HEK293 (cell line): ENCODE measurements at regions of chr2 and their contacts with region 1.

Region 1: DNA sequence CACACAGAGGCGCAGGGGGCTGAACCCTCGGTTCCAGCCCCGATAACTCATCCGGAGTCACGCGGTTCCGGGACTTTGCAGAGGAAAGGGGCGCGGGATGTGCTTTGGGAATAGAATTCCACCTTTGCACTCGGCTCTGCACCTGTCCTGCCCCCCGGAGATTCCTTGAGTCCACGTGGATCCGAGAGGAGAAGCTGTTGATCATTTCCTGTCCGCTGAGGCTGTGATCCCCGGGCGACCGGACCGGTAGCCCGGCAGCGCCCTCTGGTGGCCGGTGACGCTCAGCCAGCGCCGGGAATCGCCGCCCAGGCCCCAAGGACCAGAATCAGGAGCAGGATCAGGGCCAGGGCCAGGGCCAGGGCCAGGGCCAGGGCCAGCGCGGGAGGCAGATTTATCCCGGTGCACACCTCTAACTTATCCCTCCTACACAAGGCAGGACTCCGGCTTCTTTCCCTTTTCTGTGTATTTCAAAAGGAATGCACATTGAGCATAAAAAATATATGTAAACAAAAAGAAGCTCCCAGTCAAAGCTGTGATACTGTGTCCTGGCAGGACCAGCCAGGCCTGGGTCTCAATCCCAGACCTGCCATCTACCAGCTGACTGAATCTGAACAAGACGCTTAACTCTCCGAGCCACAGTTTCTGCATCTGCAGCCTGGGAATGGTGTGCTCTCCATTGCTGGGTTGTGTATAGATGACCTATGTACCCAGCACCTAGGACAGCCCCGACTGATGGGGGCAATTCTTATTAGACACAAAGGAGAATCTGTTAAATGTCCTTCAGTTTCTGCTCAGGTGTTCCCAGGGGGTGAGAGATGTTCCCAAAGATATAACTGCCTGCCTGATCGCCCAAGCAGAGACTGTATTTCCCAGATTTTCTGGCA is 8.5 kb upstream of the SPATA3 start:
- H3K4me3 ChIP-seq: peak overlapping the region; percentile 41
- H3K27ac ChIP-seq: no peak overlapping the region
- H3K4me1 ChIP-seq: 0 out of 2 replicates have a peak, but pooled peaks cover 3% of the 10 kb centered on the region
- CTCF ChIP-seq: peak; percentile 90

Region 2: GRCh38 chr2:230824406-230824978 is 162.9 kb before region 1 on chr2:
- CTCF ChIA-PET with region 1: interaction called, 57 read pairs
- POLR2A ChIA-PET with region 1: no interaction called
- H3K4me3 ChIP-seq: no peak overlapping the region
- H3K27ac ChIP-seq: no peak overlapping the region
- H3K4me1 ChIP-seq: no peaks in the 10 kb centered on the region
- CTCF ChIP-seq: peak; percentile 73

Region 3: DNA sequence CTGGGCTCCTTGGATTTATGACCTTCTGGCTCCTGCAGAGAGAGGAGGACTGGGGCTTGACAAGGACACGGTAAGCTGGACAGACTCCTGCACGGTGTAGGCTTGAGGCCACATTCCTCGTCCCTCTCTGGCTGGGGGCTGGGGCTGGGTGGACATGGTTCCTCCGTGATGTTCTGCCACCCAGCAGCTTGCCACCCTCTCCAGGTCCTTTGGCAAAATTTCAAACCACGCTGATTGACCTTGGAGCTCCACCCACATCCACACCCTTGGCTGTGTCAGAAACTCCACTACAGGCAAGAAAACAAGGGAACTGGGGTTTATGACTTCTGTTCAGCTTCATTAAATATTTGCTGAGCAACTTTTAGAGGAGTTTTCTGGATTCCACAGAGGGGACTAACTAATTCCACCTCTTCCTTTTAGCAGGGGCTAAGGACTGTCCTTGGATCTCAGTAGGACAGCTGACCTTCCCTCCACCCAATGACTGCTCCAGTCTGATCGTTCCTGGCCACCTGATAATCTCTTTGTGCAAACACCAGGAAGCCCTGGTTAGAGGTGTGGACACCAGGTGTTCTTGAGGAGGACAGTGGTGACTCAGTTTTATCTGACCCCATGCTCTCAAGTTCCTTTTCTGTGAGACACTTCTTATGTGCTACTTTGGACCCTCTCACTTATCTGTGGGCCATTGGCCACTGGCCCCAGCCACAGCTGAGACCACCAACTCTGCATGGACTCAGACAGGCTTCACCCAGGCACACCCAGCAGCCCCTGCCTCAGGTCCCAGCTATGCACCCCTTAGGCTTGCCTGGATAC is 91.6 kb before region 1 on chr2:
- CTCF ChIA-PET with region 1: interaction called, 55 read pairs
- POLR2A ChIA-PET with region 1: no interaction called
- H3K4me3 ChIP-seq: no peak overlapping the region
- H3K27ac ChIP-seq: no peak overlapping the region
- H3K4me1 ChIP-seq: no peaks in the 10 kb centered on the region
- CTCF ChIP-seq: no peak

Region 4: GRCh38 chr2:230942920-230943896 is 44.2 kb before region 1 on chr2:
- CTCF ChIA-PET with region 1: no interaction called
- POLR2A ChIA-PET with region 1: no interaction called
- H3K4me3 ChIP-seq: no peak overlapping the region
- H3K27ac ChIP-seq: no peak overlapping the region
- H3K4me1 ChIP-seq: no peaks in the 10 kb centered on the region
- CTCF ChIP-seq: no peak

Region 5: DNA sequence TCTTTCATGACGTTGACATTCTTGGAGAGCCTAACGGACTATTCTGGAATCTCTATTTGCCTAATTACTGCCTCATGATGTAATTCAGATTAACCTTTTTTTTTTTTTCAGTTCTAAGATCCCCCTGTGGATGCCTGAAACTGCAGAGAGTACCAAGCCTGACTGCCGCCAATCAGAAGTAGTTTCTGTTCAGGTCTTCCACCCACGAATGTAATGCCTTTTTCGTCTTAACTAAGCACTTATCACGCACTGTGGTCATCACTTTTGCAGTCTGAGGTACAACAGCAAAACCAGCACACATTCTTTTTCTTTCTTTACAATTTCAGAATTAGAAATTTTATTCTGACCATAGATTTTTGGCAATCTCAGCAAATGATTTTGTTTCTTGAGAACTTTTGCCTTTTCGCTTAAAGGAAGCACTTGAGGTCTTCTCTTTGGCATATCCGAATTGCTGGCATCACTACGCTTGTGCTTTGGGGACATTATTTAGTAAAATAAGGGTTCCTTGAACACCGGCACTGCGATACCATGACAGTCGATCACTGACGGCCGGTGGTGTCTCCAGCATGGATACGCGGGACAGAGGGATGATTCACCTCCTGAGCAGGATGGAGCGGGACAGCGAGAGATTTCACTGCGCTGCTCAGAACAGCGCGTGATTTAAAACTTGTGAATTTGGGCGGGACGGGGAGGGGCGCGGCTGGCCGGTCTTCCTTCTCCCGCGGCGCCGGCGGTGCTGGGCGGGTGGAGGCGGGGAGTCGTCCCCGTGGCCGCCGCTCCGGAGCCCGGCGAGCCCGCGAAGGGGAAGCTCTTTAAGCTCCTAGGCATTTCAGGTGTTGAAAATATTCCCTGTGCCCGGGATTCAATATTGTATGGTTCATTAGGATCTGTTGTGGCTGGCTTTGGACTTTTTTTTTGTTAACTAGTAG is 30.3 kb before region 1 on chr2:
- CTCF ChIA-PET with region 1: interaction called, 18 read pairs
- POLR2A ChIA-PET with region 1: no interaction called
- H3K4me3 ChIP-seq: peak overlapping the region; percentile 38
- H3K27ac ChIP-seq: no peak overlapping the region
- H3K4me1 ChIP-seq: no peaks in the 10 kb centered on the region
- CTCF ChIP-seq: no peak

Region 6: GRCh38 chr2:231000211-231000904 is 13.0 kb after region 1 on chr2:
- CTCF ChIA-PET with region 1: interaction called, 16 read pairs
- POLR2A ChIA-PET with region 1: no interaction called
- H3K4me3 ChIP-seq: no peak overlapping the region
- H3K27ac ChIP-seq: no peak overlapping the region
- H3K4me1 ChIP-seq: no peaks in the 10 kb centered on the region
- CTCF ChIP-seq: no peak

Region 7: DNA sequence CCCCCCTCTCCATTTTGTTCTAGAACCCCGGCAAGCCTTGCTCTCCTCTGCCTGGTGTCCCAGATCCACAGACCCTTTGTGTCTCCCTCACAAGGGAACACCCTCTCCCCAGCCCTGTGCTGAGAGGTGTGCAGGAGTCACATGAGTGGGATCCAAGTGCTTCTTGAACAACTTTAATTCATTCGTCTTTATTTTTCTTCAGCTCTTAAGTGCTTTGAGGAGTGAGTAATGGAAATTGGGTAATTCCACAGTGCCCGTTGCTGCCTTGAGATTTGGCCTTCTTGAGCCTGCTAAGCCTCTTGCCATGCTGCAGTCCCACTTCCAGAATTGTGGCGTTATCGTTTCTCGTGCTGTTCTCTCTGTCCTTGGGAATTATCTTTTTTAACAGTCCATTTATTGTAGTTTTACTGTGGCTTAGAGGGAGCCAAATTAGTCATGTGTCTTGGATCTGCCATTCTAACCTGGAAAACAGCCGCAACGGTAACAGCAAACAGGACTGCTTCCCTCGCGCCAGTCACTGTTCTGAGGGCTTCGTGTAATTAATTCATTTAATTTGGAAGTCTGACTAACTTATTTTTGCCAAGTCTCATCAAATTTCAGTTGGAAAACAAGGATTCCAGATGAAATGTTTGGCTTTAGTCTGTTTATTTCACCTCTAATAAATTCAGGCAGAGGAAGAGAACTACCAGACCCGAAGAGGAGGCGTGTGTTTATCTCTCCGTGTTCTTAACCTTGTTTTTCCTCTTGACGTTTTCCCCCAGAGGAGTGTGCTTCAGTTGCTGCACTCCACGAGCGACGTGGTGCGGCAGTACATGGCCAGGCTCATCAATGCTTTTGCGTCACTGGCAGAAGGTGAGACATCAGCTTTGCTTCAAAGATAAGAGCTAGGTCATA is 283.1 kb after region 1 on chr2:
- CTCF ChIA-PET with region 1: no interaction called
- POLR2A ChIA-PET with region 1: no interaction called
- H3K4me3 ChIP-seq: no peak overlapping the region
- H3K27ac ChIP-seq: no peak overlapping the region
- H3K4me1 ChIP-seq: no peaks in the 10 kb centered on the region
- CTCF ChIP-seq: no peak